ENCODE measurements at regions of chr1 and their contacts with region 1.

Region 1: DNA sequence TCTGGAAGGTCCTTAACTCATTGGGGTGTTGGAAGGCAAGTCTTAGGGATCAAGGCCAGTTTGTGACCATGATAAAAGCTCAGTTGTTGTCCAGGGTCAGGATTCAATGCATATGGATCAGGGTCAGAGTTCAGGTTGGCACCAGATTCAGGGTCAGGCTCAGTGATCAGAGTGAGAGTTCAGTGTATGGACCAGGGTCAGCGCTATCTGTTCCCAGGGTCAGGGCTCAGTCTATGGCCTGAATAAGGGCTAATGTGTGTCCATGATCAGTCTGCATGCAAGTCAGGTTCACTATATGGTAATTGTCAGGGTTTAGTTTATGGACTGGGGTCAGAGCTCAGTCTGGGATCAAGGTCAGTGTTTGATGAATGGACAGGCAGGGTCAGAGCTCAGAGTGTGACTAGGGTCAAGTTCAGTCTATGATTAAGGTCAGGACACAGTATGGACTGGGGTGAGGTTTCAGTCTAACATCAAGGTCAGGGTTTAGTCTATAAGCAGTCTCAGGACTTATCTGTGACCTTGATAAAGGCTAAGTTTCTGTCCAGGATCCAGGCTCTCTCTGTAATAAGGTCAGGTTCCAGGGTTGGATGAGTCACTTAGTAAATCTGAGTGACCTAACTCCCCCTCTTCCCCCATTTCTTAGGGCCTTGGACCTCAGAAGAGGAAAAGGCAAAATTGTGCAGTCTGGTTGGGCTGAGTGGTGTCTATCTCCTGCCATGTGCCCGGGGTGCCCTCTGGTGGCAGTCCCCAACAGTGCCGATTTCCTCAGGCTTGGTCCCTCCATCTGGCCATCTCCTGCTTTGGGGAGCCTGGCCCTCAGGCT is 23.8 kb downstream of the KNCN start:
- DNase-seq: peak; percentile 67
- H3K4me3 ChIP-seq: no peak overlapping the region
- H3K27ac ChIP-seq: no peak overlapping the region
- H3K4me1 ChIP-seq: no peaks in the 10 kb centered on the region
- CTCF ChIP-seq: peak; percentile 91

Region 2: DNA sequence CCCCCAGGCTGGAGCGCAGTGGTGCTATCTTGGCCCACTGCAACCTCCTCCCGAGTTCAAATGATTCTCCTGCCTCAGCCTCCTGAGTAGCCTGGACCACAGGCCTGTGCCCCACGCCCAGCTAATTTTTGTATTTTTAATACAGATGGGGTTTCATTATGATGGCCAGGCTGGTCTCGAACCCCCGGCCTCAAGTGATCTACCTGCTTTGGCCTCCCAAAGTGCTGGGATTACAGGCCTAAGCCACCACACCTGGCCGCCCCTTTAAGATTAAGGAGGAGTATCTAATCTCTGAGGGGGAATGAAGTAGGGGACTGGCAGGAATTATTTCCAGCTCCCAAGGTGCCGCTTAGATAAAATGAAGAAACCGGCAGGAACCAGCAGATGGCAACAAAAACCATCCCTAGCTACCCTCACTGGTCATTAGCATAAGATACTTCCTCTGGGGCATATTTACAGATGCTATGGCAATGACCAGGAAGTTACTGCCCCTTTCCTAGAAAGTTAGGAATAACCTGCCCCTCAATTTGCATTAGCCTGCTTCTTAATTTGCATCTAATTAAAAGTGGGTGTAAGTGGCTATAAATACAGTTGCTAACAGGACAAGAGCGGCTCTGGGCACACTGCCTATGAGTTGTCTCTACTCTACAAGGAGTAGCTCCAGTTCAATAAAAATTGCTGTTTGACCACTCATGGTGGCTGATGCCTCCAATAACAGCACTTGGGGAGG is 194.2 kb before region 1 on chr1:
- CTCF ChIA-PET with region 1: no interaction called
- POLR2A ChIA-PET with region 1: no interaction called
- intact Hi-C with region 1: loop called (anchors 1 kb)
- DNase-seq: peak; percentile 88
- H3K4me3 ChIP-seq: peak overlapping the region; percentile 51
- H3K27ac ChIP-seq: peak overlapping the region; percentile 79
- H3K4me1 ChIP-seq: peaks cover 39% of the 10 kb centered on the region
- CTCF ChIP-seq: peak; percentile 85

Region 3: DNA sequence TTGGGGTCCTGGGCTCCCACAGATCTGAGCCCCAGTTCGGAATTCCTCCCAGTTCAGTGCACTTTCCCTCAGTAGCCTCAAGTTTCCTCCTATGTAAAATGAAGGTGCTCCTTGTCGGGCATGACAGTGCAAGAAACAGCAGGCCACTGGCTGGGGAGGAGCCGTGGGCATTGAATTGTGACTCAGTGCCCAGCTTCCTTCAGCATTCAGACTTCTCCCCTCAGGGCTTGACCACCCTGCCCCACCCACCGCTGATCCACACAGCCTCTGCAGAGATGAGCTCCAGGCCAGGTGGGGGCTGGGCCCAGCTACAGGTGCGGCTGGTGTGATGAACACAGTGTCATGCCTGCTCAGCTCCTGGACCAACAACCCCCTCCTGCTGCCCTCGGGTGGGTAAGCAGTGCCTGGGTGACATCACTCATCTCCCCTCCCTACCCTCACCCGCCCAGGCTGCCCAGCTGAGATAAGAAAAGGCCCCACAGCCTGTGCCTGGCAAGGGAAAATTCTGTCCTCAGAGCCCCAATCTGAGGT is 84.1 kb after region 1 on chr1:
- CTCF ChIA-PET with region 1: no interaction called
- POLR2A ChIA-PET with region 1: no interaction called
- intact Hi-C with region 1: no loop called
- DNase-seq: no peak
- H3K4me3 ChIP-seq: no peak overlapping the region
- H3K27ac ChIP-seq: no peak overlapping the region
- H3K4me1 ChIP-seq: peaks cover 17% of the 10 kb centered on the region
- CTCF ChIP-seq: no peak

Region 4: DNA sequence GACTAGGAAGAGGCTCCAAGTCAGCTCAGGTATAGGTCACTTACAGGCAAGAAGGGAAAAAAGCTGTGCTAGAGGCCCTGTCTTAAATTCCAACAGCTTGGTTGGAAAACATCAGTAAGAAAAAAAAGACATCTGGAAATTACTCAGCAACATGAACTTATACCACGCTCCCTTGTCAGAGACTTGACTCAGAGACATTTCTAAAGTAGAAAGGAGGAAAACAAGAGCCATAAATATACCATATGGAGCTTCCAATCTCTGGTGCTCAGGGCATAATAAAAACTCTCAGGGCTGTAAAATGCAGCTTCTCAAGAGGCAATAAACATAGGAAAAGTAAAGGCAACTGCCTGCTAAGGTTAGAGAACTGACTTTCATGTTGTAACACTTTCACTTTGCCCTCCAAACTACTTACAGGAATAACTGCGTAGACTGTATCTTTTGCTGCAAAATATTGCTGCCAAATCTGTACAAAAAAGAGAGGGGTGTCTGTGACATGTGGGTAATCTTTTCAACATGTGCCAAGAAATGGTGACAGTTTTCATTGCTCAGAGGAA is 125.8 kb after region 1 on chr1:
- CTCF ChIA-PET with region 1: no interaction called
- POLR2A ChIA-PET with region 1: no interaction called
- intact Hi-C with region 1: no loop called
- DNase-seq: no peak
- H3K4me3 ChIP-seq: no peak overlapping the region
- H3K27ac ChIP-seq: no peak overlapping the region
- H3K4me1 ChIP-seq: no peaks in the 10 kb centered on the region
- CTCF ChIP-seq: no peak

Region 5: GRCh38 chr1:46910790-46911189 is 383.1 kb after region 1 on chr1:
- CTCF ChIA-PET with region 1: no interaction called
- POLR2A ChIA-PET with region 1: no interaction called
- intact Hi-C with region 1: no loop called
- DNase-seq: no peak
- H3K4me3 ChIP-seq: no peak overlapping the region
- H3K27ac ChIP-seq: no peak overlapping the region
- H3K4me1 ChIP-seq: no peaks in the 10 kb centered on the region
- CTCF ChIP-seq: no peak